ENCODE measurements at regions of chr2 and their contacts with region 1.

Region 1: GRCh38 chr2:65432227-65433190 is at the start of gene SPRED2:
- DNase-seq: peak; percentile 66 to 95 (median 86)

Region 2: DNA sequence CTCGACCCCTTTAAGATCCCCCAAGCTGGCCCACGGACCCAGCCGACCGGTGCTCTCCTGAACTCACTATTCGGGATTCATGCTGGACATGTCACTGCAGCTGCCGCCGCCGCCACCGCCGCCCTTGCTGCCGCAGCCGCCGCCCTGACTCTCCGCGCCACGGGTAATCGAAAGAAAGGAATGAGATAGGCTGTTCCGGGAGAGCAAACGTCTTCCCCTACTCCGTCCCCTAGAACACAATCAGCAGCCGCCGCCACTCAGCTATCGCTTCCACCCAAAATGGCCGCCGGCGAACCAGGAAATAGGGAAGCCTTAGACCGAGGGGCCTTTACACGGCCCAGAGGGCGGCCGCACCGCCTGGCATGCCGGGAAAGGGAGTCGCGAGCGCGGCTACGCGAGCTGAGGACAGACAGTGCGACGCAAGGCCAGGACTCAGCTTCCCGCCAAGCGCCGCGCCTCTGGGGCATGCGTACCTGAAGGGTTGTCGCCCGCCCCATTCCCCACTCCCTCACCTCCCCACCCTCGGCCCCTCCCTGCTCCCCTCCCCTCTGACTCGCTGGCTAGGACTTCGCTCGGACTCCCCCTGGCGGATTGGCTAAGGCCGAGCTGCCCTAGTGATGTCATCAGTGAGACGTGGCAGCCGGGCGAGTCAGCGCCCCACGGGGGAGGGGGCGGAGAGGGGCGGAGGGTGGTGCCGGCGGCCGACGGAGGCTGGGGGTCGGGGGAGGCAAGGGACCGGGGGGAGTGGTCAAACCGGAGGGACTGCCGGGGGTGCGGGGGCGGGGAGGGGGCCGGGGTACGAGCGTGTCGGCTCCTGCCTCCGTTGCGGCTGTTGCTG is 302.5 kb before region 1 on chr2 and contains the start of gene RAB1A:
- intact Hi-C with region 1: loop called (anchors 10 kb)
- DNase-seq: peak; percentile 98 to 100 (median 99)

Region 3: DNA sequence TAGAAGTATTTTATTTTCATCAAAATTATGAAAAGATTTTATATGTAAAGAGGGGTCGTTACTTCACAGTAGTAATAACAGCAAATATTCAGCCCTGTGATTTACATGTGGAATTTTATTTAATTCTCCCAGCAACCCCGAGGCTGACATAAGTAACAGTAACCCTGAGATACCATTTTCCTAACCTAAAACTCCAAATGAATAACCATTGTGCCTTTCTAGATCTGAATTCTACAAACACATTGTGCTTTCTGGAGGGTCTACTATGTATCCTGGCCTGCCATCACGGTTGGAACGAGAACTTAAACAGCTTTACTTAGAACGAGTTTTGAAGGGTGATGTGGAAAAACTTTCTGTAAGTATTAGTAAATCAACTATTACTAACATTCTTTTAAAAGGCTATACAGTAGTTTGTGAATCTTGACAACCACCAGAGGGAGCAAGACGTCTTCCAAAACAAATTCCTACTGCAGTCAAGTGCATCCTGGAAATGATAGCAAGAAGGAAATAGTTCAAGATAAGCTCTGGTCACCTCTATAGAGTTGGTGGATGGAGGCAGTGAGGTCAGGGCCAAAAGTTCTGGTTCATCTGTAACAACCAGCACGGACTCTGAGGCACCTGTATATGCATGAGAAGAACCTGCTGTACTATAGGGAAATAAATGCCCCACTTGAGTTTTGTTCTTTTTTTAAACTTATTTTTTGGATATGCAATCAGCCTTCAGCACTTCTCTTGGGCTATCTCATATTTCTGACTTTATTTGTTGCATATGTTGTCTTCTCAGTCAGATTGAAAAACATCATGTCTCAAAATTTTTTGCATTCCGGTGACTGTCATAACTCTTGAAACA is 167.5 kb before region 1 on chr2:
- intact Hi-C with region 1: loop called (anchors 10 kb)
- DNase-seq: peak in 24 of 42 donors; percentile 18 to 79 (median 50)

Region 4: GRCh38 chr2:65300761-65301711 is 131.5 kb before region 1 on chr2:
- intact Hi-C with region 1: loop called (anchors 10 kb)
- DNase-seq: peak; percentile 42 to 91 (median 70)

Region 5: DNA sequence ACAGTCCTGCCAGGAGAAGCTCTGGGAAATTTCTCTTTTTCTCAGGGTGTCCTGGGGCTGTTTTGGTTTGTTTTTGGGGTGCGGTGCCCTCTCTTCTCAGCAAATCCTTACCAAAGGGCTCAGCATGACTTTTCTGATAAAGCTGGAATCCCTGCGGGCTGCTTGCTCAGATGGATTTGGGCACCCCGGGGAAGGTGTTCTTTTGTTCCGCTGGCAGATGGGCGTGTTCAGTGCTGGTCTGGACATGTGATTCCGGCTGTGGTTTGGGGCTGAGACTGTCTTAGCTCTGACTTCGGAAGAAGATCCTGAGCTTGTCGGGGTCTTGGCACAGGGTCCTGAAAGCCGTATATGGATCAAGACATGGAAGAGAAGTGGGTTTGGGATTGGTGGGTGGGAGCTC is 134.1 kb after region 1 on chr2:
- intact Hi-C with region 1: loop called (anchors 10 kb)
- DNase-seq: no peak

Measured in head of caudate nucleus (tissue), 42 donors.